ENCODE measurements at regions of chrX and their contacts with region 1.

Region 1: GRCh38 chrX:41116948-41117347 is 31.7 kb downstream of the USP9X start:
- DNase-seq: peak in 1 of 2 experiments; percentile 1
- H3K4me3 ChIP-seq: no peak overlapping the region
- H3K27ac ChIP-seq: no peak overlapping the region
- H3K4me1 ChIP-seq: no peaks in the 10 kb centered on the region
- H3K27me3 ChIP-seq: no peaks in the 10 kb centered on the region
- CTCF ChIP-seq: no peak

Region 2: GRCh38 chrX:40922307-40922706 is 194.6 kb before region 1 on chrX:
- CTCF ChIA-PET with region 1: interaction called, 5 read pairs
- POLR2A ChIA-PET with region 1: interaction called, 11 read pairs
- intact Hi-C with region 1: no loop called
- DNase-seq: peak; percentile 31 to 83
- H3K4me3 ChIP-seq: no peak overlapping the region
- H3K27ac ChIP-seq: peak overlapping the region; percentile 76
- H3K4me1 ChIP-seq: no peaks in the 10 kb centered on the region
- H3K27me3 ChIP-seq: no peaks in the 10 kb centered on the region
- CTCF ChIP-seq: peak; percentile 50

Region 3: DNA sequence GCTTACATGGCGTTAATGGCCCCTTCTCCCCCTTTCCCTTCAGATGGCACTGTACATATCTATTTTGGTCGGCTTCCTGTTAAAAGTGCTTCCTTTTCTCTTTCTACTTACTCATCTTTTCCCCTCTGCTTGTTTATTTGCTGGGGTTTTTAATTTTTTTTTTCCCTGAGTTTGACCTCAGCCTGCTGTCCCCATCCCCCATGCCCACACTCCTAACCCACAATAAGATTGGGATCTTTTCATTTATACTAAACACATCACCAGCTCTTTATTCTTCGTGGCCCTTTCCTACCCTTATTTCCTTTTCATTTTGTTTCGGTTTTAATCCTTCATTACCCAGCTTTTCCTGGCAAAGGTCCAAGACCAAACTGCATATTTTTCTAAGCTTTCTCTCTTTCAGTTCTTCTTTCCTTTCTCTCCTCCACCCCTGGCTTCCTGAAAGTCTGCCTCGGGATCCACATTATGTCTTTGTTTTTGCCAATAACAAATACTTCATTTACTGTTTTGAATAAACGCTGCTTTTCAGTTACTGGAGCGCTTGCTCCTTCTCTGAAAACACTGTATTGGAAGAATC is 183.7 kb before region 1 on chrX:
- CTCF ChIA-PET with region 1: no interaction called
- POLR2A ChIA-PET with region 1: no interaction called
- intact Hi-C with region 1: loop called (anchors 10 kb)
- DNase-seq: peak in 1 of 2 experiments; percentile 1
- H3K4me3 ChIP-seq: no peak overlapping the region
- H3K27ac ChIP-seq: peak overlapping the region; percentile 60
- H3K4me1 ChIP-seq: no peaks in the 10 kb centered on the region
- H3K27me3 ChIP-seq: no peaks in the 10 kb centered on the region
- CTCF ChIP-seq: no peak

Region 4: DNA sequence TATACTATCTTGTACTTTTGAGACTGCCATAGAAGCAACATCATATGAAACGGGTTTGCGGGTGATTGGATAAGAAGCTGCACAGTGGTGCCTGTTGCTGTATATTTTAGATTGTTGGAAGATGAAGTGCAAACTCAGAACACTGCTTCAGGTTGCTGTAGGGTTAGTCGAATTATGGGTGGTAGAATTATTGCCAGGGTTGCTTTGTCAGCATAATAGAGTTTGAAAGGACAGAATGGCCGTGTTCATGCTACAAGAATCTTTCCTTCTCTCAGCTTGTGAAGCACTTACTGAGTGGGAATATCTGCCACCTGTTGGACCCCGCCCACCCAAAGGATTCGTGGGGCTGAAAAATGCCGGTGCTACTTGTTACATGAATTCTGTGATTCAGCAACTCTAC is 83.8 kb after region 1 on chrX:
- CTCF ChIA-PET with region 1: no interaction called
- POLR2A ChIA-PET with region 1: no interaction called
- intact Hi-C with region 1: no loop called
- DNase-seq: no peak
- H3K4me3 ChIP-seq: no peak overlapping the region
- H3K27ac ChIP-seq: no peak overlapping the region
- H3K4me1 ChIP-seq: no peaks in the 10 kb centered on the region
- H3K27me3 ChIP-seq: no peaks in the 10 kb centered on the region
- CTCF ChIP-seq: no peak

Region 5: GRCh38 chrX:41300758-41301437 is 183.9 kb after region 1 on chrX:
- CTCF ChIA-PET with region 1: no interaction called
- POLR2A ChIA-PET with region 1: no interaction called
- intact Hi-C with region 1: no loop called
- DNase-seq: peak in 1 of 2 experiments; percentile 38
- H3K4me3 ChIP-seq: no peak overlapping the region
- H3K27ac ChIP-seq: peak overlapping the region; percentile 64
- H3K4me1 ChIP-seq: peaks cover 19% of the 10 kb centered on the region; the same call in 1 of the 2 replicates
- H3K27me3 ChIP-seq: no peaks in the 10 kb centered on the region
- CTCF ChIP-seq: no peak

Region 6: DNA sequence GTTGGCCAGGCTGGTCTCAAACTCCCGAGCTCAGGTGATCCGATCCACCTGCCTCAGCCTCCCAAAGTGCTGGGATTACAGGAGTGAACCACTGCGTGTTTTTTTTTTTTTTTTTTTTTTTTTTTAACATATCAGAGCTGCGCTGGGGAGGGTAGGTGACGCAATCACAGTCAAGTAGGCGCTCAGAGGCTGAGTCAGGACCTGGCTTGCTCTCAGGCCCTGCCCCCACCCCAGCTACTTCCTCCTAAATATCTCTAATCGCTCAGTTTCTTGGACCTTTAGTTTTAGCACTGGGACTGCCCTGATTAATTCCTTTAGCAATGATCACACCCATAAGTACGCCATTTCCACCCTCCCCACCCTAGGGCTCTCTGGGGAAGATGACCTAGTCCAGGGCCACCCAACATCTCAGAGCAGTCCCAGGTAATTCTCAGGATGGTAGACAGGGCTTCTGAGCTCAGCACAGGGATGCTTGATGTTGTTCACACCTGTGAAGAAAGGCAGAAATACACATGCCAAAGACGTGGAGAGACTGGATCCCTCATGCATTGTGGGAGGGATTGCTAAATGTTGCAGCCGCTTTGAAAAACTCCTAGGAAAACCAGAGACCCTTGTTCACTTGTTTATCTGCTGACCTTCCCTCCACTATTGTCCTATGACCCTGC is 267.2 kb after region 1 on chrX:
- CTCF ChIA-PET with region 1: no interaction called
- POLR2A ChIA-PET with region 1: no interaction called
- intact Hi-C with region 1: no loop called
- DNase-seq: peak; percentile 43 to 72
- H3K4me3 ChIP-seq: no peak overlapping the region
- H3K27ac ChIP-seq: peak overlapping the region; percentile 88
- H3K4me1 ChIP-seq: peaks cover 18% of the 10 kb centered on the region
- H3K27me3 ChIP-seq: no peaks in the 10 kb centered on the region
- CTCF ChIP-seq: no peak

Region 7: GRCh38 chrX:42398967-42399631 is 1282.2 kb after region 1 on chrX:
- CTCF ChIA-PET with region 1: no interaction called
- POLR2A ChIA-PET with region 1: no interaction called
- intact Hi-C with region 1: no loop called
- DNase-seq: no peak
- H3K4me3 ChIP-seq: no peak overlapping the region
- H3K27ac ChIP-seq: no peak overlapping the region
- H3K4me1 ChIP-seq: no peaks in the 10 kb centered on the region
- H3K27me3 ChIP-seq: no peaks in the 10 kb centered on the region
- CTCF ChIP-seq: no peak